K562 (cell line): ENCODE measurements at regions of chr1 and their contacts with region 1.

Region 1: DNA sequence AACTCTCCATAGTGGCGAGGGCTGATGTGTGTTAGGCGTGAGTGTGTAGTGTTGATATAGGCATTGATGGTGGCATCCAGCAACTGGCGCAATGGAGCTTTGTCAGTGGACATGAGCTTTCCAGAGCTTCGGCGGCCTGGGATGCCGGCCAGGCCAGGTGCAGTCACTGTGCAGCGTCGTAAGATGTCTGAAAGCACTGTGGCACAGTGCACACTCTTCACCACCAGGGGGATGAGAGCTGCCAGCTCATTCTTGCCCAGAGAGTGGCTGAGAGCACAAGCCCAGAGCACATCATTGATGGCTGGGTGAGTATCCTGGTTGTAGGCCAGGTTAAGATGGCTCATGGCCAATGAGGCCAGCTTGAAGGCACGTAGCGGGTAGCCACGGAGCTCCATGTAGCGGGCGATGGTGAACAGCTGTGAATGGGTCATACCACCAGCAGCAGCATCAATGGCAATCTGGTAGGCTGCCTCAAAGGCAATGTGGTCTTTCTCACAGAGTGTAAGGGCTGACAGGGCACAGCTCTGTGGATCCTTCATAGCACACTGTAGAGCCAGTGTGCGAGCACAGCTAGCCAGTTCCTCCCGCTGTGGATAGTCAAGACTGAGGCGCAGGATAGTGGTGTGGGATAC is 6.7 kb downstream of the UROD start:
- DNase-seq: peak; percentile 48 to 77 (median 53)
- ATAC-seq: peak; percentile 81
- H3K4me3 ChIP-seq: no peak overlapping the region
- H3K27ac ChIP-seq: no peak overlapping the region
- H3K4me1 ChIP-seq: peaks cover 22 to 23% of the 10 kb centered on the region in 2 experiments; a peak in 4 of 5 replicates
- H3K27me3 ChIP-seq: no peaks in the 10 kb centered on the region
- CTCF ChIP-seq: peak; percentile 78 to 86 (median 85)
- EP300 ChIP-seq: no peak
- POLR2A ChIP-seq: no peak
- RAD21 ChIP-seq: peak; percentile 74 to 90

Region 2: DNA sequence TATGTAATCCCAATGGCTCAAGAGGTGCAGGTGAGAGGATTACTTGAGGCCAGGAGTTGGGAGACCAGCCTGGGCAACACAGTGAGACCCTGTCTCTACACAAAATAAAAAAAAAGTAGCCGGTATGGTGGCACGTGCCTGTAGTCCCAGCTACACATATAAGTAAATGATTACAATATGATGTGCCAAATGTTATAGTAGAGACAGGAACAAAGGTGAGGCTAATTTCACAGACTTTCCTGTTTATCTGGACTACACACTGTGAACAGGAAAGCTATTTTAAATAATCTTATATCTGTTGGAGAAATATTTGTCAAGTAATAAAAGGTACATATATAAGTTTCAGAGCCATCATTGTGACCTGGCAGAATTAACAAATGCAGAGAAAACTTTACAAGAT is 71.0 kb after region 1 on chr1:
- CTCF ChIA-PET with region 1: no interaction called
- POLR2A ChIA-PET with region 1: interaction called, 3 read pairs
- in situ Hi-C with region 1: no loop called
- intact Hi-C with region 1: loop called (anchors 5 kb)
- DNase-seq: no peak
- ATAC-seq: no peak
- H3K4me3 ChIP-seq: no peak overlapping the region
- H3K27ac ChIP-seq: no peak overlapping the region
- H3K4me1 ChIP-seq: no peaks in the 10 kb centered on the region
- H3K27me3 ChIP-seq: peaks cover 0 to 4% of the 10 kb centered on the region in 2 experiments; a peak in 2 of 5 replicates
- CTCF ChIP-seq: no peak
- EP300 ChIP-seq: no peak
- POLR2A ChIP-seq: no peak
- RAD21 ChIP-seq: no peak